CD14-positive monocyte (primary cell): ENCODE measurements at regions of chr3 and their contacts with region 1.

Region 1: DNA sequence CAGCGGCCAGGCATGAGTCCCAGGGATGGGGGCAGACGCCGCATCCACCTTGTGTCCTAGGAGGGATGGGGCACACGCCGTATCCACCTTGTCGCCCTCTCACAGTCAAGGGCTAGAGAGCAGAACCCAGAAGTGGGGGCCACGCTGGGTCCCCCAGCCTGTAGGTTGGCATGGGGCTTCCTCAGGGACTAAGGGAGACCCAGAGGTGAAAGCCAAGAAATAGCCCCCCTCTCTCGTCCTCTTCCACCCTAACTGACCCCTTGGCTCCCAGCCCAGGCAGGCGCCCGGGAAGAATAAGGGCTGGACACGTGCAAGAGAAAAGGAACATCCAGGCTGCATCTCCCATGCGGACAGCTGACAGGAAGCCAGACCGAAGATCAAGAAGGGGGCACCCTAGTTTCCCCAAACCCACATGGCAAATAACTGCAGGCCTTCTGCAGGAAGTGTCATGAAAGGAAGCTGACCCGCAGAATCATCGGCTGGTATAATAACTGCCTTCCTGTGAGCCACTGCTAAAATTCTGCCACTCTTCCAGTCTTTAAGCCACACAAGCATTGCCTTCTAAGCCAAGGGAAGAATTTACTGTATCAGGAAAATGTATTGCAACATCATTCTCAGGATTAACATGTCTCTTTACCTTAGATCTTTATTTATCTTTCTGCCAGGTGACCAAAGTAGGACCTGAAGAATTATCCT is 38.5 kb upstream of the TFRC start:
- DNase-seq: peak; percentile 33 to 46 (median 45)
- H3K4me3 ChIP-seq: peak overlapping the region in 1 of 3 experiments; percentile 23
- H3K4me3 Mint-ChIP-seq: peak overlapping the region in 1 of 2 donors; percentile 60
- H3K27ac ChIP-seq: no peak overlapping the region
- H3K27ac Mint-ChIP-seq: peak overlapping the region in 2 of 7 donors; percentile 65 to 66
- H3K4me1 ChIP-seq: peaks cover 41 to 58% of the 10 kb centered on the region in 2 donors
- H3K4me1 Mint-ChIP-seq: peaks cover 48% of the 10 kb centered on the region
- H3K27me3 ChIP-seq: peaks cover 0 to 2% of the 10 kb centered on the region in 2 donors
- H3K27me3 Mint-ChIP-seq: peaks cover 0 to 4% (median 2%) of the 10 kb centered on the region in 3 donors
- CTCF ChIP-seq: no peak

Region 2: GRCh38 chr3:196063456-196063855 is 57.0 kb before region 1 on chr3:
- intact Hi-C with region 1: no loop called
- DNase-seq: no peak
- H3K4me3 ChIP-seq: no peak overlapping the region
- H3K4me3 Mint-ChIP-seq: no peak overlapping the region
- H3K27ac ChIP-seq: no peak overlapping the region
- H3K27ac Mint-ChIP-seq: peak overlapping the region in 3 of 7 donors; percentile 33 to 74 (median 73)
- H3K4me1 ChIP-seq: no peaks in the 10 kb centered on the region
- H3K4me1 Mint-ChIP-seq: no peaks in the 10 kb centered on the region
- H3K27me3 ChIP-seq: no peaks in the 10 kb centered on the region
- H3K27me3 Mint-ChIP-seq: no peaks in the 10 kb centered on the region
- CTCF ChIP-seq: no peak

Region 3: DNA sequence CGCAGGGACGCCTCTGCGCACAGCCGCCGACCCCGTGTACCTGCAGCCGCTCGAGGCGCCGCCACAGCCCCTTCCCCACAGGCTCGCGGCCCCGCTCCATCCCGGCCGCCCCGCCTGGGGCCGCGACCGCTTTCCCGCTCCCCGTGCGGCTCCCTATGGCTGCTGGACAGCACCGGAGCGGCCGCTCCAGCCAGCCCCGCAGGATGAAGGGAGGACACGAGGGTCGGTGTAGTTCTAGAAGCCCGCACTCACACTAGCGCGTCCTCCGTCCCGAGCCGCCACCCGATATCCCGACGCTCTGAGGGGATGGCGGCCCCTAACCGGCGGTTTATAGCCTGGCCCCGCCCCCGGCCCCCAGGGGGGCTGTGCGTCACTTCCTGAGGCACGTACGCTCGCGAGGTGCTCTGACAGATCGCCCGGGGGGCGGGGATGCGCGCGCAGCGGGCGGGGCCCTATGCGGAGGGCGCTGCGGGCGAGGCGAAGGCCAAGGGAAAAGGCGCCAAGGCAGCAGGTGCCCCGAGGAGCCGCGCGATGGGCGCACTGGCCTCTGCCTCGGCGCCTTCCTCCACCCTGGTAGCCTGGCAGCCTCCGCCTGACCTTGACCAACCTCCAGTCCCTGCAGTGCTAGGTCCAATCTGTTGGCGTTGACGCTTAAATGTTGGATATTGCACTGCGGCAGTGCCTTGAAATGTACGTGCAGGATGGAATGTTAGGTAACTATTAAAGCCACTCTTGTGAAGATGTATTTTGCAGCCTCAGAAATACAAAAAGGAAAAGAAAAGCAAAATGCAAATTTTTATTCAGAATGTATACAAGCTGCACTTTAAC is 38.4 kb before region 1 on chr3 and contains the start of gene TFRC:
- intact Hi-C with region 1: loop called in 1 of 2 experiments (anchors 5 kb)
- DNase-seq: peak; percentile 90 to 91 (median 91)
- H3K4me3 ChIP-seq: peak within 1 kb of the TSS; percentile 82 to 91 (median 88)
- H3K4me3 Mint-ChIP-seq: peak within 1 kb of the TSS; percentile 97
- H3K27ac ChIP-seq: peak within 1 kb of the TSS; percentile 66 to 94
- H3K27ac Mint-ChIP-seq: peak within 1 kb of the TSS; percentile 91 to 96 (median 94)
- H3K4me1 ChIP-seq: peaks cover 23 to 26% of the 10 kb centered on the region in 2 donors
- H3K4me1 Mint-ChIP-seq: peaks cover 38% of the 10 kb centered on the region
- H3K27me3 ChIP-seq: no peaks in the 10 kb centered on the region
- H3K27me3 Mint-ChIP-seq: peaks cover 0 to 2% (median 0%) of the 10 kb centered on the region in 3 donors
- CTCF ChIP-seq: no peak
- polyA plus RNA-seq, gene TFRC: 6.6 to 43.1 (median 7.9) TPM

Region 4: GRCh38 chr3:196168808-196169391 is 48.5 kb after region 1 on chr3:
- intact Hi-C with region 1: no loop called
- DNase-seq: no peak
- H3K4me3 ChIP-seq: no peak overlapping the region
- H3K4me3 Mint-ChIP-seq: no peak overlapping the region
- H3K27ac ChIP-seq: peak overlapping the region; percentile 88
- H3K27ac Mint-ChIP-seq: peak overlapping the region; percentile 16 to 99 (median 90)
- H3K4me1 ChIP-seq: peaks cover 38 to 43% of the 10 kb centered on the region in 2 donors
- H3K4me1 Mint-ChIP-seq: peaks cover 22% of the 10 kb centered on the region
- H3K27me3 ChIP-seq: no peaks in the 10 kb centered on the region
- H3K27me3 Mint-ChIP-seq: peaks cover 0 to 3% (median 0%) of the 10 kb centered on the region in 3 donors
- CTCF ChIP-seq: no peak